Activated naive CD4-positive, alpha-beta T cell treated with anti-CD3 and anti-CD28 coated beads for 36 hours (primary cell): ENCODE measurements at regions of chr13 and their contacts with region 1.

Region 1: DNA sequence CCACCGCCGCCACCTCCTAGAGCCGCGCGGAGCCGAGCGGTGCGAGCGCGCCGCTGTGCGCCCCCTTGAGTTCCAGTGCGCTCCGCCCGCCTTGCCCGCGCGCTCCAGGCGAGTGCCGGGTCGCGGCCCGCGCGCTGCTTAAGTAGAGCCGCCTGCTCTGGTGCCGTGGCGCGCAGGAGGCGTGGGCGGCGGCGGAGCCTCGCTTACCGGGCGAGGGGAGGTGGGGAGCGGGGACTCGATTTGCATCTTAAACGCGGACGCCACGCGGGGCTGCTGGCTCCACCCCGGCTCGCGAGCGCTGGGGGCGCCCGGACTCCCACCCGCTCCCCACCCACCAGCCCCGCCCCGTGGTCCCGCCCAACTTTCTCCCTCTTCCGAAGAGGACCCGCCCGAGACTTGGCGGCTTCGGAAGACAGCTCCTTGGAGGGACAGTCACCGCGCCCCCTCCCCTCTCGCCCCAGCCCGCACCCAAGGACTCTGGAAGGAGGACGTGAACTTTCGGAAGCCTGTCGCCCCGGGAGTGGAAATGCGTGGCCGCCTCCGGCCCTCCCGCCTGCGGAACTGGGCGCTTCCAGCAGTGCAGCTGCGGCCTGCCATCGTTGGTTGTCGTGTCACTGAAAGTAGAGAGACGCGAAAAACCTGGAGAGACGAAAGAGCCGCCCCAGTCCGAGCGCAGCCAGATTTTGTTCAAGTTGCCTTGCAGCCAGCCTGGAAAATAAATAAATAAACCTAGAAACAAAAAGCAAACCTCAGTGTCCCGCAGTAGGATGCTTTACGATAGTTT is at the start of gene KCTD12:
- DNase-seq: peak; percentile 70
- H3K4me3 Mint-ChIP-seq: peak within 1 kb of the TSS; percentile 89
- H3K27ac Mint-ChIP-seq: peak within 1 kb of the TSS; percentile 78
- H3K4me1 Mint-ChIP-seq: peaks cover 28% of the 10 kb centered on the region
- H3K27me3 Mint-ChIP-seq: peaks cover 7% of the 10 kb centered on the region
- total RNA-seq, gene KCTD12: 6.2 to 6.4 TPM

Region 2: GRCh38 chr13:75694722-75695121 is 1191.8 kb before region 1 on chr13:
- CTCF ChIA-PET with region 1: no interaction called
- intact Hi-C with region 1: loop called (anchors 5 kb)
- DNase-seq: no peak
- H3K4me3 Mint-ChIP-seq: no peak overlapping the region
- H3K27ac Mint-ChIP-seq: no peak overlapping the region
- H3K4me1 Mint-ChIP-seq: peaks cover 4% of the 10 kb centered on the region
- H3K27me3 Mint-ChIP-seq: no peaks in the 10 kb centered on the region

Region 3: GRCh38 chr13:76667551-76667950 is 218.9 kb before region 1 on chr13:
- CTCF ChIA-PET with region 1: interaction called, 4 read pairs
- intact Hi-C with region 1: loop called (anchors 1 kb)
- DNase-seq: peak; percentile 40
- H3K4me3 Mint-ChIP-seq: no peak overlapping the region
- H3K27ac Mint-ChIP-seq: no peak overlapping the region
- H3K4me1 Mint-ChIP-seq: peaks cover 7% of the 10 kb centered on the region
- H3K27me3 Mint-ChIP-seq: no peaks in the 10 kb centered on the region

Region 4: GRCh38 chr13:76828316-76828741 is 58.2 kb before region 1 on chr13:
- CTCF ChIA-PET with region 1: interaction called, 17 read pairs
- intact Hi-C with region 1: loop called (anchors 1 kb)
- DNase-seq: peak; percentile 60
- H3K4me3 Mint-ChIP-seq: no peak overlapping the region
- H3K27ac Mint-ChIP-seq: peak overlapping the region; percentile 69
- H3K4me1 Mint-ChIP-seq: peaks cover 12% of the 10 kb centered on the region
- H3K27me3 Mint-ChIP-seq: no peaks in the 10 kb centered on the region

Region 5: DNA sequence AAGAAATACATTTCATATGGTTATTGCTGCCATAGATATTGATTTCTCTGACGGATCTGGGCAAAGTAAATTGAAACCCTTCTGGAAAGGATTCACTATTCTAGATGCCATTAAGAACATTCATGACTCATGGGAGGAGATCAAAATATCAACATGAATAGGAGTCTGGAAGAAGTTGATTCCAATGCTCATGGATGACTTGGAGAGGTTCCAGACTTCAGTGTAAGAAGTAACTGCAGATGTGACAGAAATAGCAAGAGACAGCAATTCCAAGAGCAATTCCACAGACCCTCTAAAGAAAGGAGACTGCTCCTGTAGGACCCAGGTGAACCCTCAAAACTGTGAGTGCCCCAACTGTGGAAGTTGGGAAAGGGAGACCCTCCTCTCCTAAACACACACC is 30.6 kb after region 1 on chr13:
- CTCF ChIA-PET with region 1: no interaction called
- intact Hi-C with region 1: no loop called
- DNase-seq: no peak
- H3K4me3 Mint-ChIP-seq: no peak overlapping the region
- H3K27ac Mint-ChIP-seq: no peak overlapping the region
- H3K4me1 Mint-ChIP-seq: no peaks in the 10 kb centered on the region
- H3K27me3 Mint-ChIP-seq: peaks cover 3% of the 10 kb centered on the region

Region 6: GRCh38 chr13:77150651-77151050 is 264.2 kb after region 1 on chr13:
- CTCF ChIA-PET with region 1: no interaction called
- intact Hi-C with region 1: no loop called
- DNase-seq: no peak
- H3K4me3 Mint-ChIP-seq: no peak overlapping the region
- H3K27ac Mint-ChIP-seq: no peak overlapping the region
- H3K4me1 Mint-ChIP-seq: no peaks in the 10 kb centered on the region
- H3K27me3 Mint-ChIP-seq: no peaks in the 10 kb centered on the region

Region 7: GRCh38 chr13:77480066-77480465 is 593.6 kb after region 1 on chr13:
- CTCF ChIA-PET with region 1: no interaction called
- intact Hi-C with region 1: loop called (anchors 1 kb)
- DNase-seq: no peak
- H3K4me3 Mint-ChIP-seq: no peak overlapping the region
- H3K27ac Mint-ChIP-seq: no peak overlapping the region
- H3K4me1 Mint-ChIP-seq: peaks cover 16% of the 10 kb centered on the region
- H3K27me3 Mint-ChIP-seq: no peaks in the 10 kb centered on the region